Psoas muscle (tissue), 8 donors: ENCODE measurements at regions of chr2 and their contacts with region 1.

Region 1: GRCh38 chr2:75064691-75065396 is 106.4 kb downstream of the POLE4 start:
- DNase-seq: peak; percentile 32 to 67
- ATAC-seq: peak; percentile 46 to 73 (median 64)
- H3K4me3 ChIP-seq: no peak overlapping the region
- H3K27ac ChIP-seq: no peak overlapping the region
- H3K4me1 ChIP-seq: no peaks in the 10 kb centered on the region
- H3K27me3 ChIP-seq: peaks cover 0 to 2% (median 0%) of the 10 kb centered on the region in 3 donors
- CTCF ChIP-seq: peak; percentile 75

Region 2: DNA sequence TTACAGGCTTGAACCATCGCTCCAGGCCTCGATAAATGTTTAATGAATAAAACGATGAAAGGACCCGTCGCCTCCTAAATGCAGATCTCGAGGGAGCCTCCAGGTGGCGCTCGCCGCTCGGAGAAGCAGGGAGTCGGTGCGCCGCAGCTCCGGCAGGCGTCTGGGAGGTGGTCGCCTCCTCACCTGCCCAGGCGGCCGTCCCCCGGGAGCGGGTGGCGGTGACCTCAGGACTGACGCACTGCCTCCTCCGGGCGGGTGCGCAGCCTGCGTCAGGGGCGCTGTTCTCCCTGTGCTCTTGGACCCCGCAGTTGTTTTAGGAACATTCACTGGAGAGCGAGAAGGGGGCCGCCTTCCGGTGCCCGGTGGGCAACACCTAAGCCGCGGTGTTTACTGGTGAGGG is 145.0 kb before region 1 on chr2:
- intact Hi-C with region 1: loop called in 1 of 2 experiments (anchors 5 kb)
- DNase-seq: peak; percentile 64 to 81
- ATAC-seq: peak; percentile 69 to 84 (median 76)
- H3K4me3 ChIP-seq: peak overlapping the region; percentile 57
- H3K27ac ChIP-seq: no peak overlapping the region
- H3K4me1 ChIP-seq: no peaks in the 10 kb centered on the region
- H3K27me3 ChIP-seq: peaks cover 0 to 12% (median 3%) of the 10 kb centered on the region in 3 donors
- CTCF ChIP-seq: peak; percentile 85